Activated B cell treated with CpG ODN at 0.5 μM for 24 hours (primary cell): ENCODE measurements at regions of chr11 and their contacts with region 1.

Region 1: DNA sequence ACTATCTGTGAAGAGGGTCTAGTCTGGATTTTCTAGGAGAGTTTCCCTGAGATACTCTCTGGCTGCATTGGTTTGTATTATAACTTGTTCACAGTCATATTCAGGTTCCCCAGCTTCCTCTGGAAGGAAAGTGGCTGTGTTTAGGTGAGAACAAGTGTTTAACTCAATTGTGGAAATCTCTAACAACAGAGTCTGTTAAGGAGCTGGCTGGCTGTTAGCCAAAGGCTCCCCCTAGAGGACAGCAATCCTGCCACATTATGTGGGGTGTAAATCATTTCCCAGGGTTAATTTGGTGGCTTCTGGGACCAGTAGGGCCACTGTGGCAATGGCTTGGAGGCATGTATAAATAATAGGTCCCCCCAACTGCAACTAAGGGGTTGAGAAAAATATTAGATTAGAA is 18.4 kb downstream of the MS4A6E start:
- DNase-seq: no peak
- ATAC-seq: peak; percentile 56
- H3K4me3 Mint-ChIP-seq: no peak overlapping the region
- H3K27ac Mint-ChIP-seq: no peak overlapping the region
- H3K4me1 Mint-ChIP-seq: peaks cover 35% of the 10 kb centered on the region
- H3K27me3 Mint-ChIP-seq: no peaks in the 10 kb centered on the region
- CTCF ChIP-seq: no peak

Region 2: DNA sequence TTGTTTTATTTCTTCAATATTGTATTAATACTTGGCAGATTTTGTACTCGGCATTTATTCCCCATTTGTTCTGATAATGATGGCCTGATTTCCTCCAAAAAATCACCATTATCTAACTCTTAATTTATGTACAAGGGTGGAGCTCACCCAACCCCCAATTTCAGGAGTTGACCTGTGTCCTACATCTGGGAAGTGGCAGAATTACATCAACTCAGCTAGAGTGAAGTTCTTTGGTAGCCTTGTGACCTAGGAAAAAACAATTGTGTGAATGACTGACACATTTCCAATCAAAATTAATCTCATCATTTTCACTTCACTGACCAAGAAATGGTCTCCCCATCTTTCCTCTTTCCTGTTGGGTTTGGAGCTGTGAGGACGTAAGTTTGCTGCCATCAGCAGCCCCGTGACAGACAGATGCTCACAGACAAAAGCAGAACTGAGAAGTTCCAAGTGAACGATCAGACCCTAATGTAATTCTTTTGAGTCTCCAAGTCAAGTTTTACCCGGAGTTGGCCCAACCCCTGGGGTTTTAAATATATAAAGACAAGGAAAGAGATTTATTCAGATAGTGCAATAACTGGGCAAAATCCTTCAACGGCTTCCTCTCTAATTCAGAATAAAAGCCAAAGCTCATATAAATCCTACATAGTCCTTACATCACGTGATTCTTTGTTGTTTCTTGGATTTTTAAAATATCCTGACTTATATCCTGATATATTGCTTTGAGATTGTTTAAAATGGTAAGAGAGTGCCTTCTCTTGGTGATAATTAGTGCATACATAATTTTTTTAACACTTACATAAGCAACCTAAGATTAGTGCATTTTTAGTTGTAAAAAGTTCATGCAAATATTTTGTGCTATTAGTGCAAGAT is 34.8 kb before region 1 on chr11:
- CTCF ChIA-PET with region 1: interaction called, 4 read pairs
- POLR2A ChIA-PET with region 1: interaction called, 3 read pairs
- intact Hi-C with region 1: loop called (anchors 5 kb)
- DNase-seq: no peak
- ATAC-seq: peak; percentile 75
- H3K4me3 Mint-ChIP-seq: peak overlapping the region; percentile 58
- H3K27ac Mint-ChIP-seq: peak overlapping the region; percentile 91
- H3K4me1 Mint-ChIP-seq: peaks cover 49% of the 10 kb centered on the region
- H3K27me3 Mint-ChIP-seq: no peaks in the 10 kb centered on the region
- CTCF ChIP-seq: no peak

Region 3: DNA sequence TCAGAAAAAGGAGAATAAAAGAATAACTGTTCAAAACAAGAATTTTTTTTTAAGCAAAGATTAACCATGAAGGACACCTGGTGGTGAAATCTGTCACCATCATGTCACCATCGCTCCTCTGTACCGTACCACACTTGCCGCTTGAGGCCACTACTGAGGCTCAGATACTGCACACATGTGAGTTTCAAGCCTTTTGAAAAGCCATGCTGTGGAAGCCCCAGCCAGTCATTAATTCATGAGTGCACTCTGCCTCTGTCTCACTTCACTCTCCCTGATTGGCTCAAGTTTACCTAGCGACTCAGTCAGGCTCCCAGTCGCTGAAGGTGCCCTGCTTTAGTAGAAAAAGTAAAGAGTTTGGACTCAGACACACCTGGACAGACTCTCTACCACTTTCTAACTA is 140.5 kb after region 1 on chr11:
- CTCF ChIA-PET with region 1: interaction called, 12 read pairs
- POLR2A ChIA-PET with region 1: no interaction called
- intact Hi-C with region 1: loop called (anchors 1 kb)
- DNase-seq: peak; percentile 40
- ATAC-seq: peak; percentile 95
- H3K4me3 Mint-ChIP-seq: peak overlapping the region; percentile 42
- H3K27ac Mint-ChIP-seq: peak overlapping the region; percentile 63
- H3K4me1 Mint-ChIP-seq: peaks cover 55% of the 10 kb centered on the region
- H3K27me3 Mint-ChIP-seq: no peaks in the 10 kb centered on the region
- CTCF ChIP-seq: peak; percentile 44

Region 4: DNA sequence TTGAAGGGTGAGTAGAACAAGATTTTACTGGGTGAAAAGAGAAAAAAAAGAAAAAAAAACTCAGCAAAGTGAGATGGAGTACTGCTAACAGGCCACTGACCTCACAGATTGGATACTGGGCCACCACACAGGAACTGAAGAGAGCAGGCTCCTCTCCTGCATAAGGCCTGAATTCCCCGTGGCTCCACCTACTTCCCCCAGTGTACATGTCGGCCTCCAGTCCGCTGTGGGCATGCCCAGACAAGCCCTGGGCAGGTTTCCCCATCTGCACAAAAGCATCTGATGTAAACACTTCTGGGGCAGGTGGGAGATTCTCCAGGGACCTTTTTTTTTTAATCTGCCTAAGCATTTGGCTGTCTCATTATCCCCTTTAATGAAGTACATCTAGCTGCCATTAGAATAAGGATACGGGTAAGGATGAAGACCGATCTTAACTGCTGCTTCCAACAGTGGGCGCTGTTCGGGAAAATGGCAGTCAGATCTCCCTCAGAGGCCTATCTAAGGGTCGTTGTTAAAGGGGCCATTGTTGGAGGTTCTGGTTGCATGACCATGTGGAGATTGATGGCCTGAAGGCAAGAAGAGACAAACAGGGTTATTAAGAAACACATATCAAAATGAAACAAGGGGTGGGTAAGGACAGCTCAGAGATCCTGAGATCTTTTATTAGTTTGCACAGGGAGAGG is 218.2 kb after region 1 on chr11:
- CTCF ChIA-PET with region 1: no interaction called
- POLR2A ChIA-PET with region 1: no interaction called
- intact Hi-C with region 1: no loop called
- DNase-seq: no peak
- ATAC-seq: peak; percentile 75
- H3K4me3 Mint-ChIP-seq: no peak overlapping the region
- H3K27ac Mint-ChIP-seq: no peak overlapping the region
- H3K4me1 Mint-ChIP-seq: peaks cover 9% of the 10 kb centered on the region
- H3K27me3 Mint-ChIP-seq: peaks cover 3% of the 10 kb centered on the region
- CTCF ChIP-seq: no peak

Region 5: DNA sequence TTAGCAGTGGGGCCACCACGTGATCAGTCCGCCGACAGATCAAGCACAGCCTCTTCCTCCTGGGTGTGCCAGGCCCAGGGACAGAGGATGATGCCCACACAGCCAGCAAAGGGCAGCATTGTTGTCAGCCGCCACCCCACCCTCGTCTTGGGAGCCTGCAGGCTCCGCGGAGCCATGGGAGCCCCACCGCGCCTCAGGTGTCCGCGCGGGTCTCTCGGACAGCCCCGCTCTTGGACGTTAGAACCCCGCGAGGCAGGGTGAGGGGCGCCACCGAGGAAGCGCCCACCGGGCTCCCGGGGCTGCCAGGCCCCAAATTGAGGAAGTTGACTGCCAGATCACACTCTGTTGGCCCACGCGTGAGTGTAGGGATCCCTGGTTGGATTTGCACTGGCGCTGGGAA is 270.0 kb after region 1 on chr11:
- CTCF ChIA-PET with region 1: interaction called, 50 read pairs
- POLR2A ChIA-PET with region 1: no interaction called
- intact Hi-C with region 1: loop called (anchors 1 kb)
- DNase-seq: no peak
- ATAC-seq: no peak
- H3K4me3 Mint-ChIP-seq: no peak overlapping the region
- H3K27ac Mint-ChIP-seq: no peak overlapping the region
- H3K4me1 Mint-ChIP-seq: peaks cover 10% of the 10 kb centered on the region
- H3K27me3 Mint-ChIP-seq: peaks cover 9% of the 10 kb centered on the region
- CTCF ChIP-seq: no peak

Region 6: DNA sequence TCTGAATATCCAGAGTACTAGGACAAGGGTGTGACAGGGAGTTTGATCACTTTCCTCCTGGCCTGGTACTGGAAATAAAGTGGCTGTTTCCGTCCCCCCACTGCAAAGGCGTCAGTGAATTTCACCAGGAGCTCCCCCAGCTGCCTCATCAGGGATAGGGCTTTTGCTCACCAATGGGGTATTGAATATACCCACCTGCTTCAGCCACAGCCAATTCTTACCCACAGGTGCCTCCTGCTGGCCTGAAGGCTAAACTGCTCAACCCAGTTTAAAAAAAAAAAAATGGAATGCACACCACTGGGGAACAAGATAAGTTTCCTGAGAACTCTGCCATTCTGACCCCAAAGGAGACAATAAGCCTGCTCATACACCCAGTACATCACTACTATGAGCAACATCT is 288.6 kb after region 1 on chr11:
- CTCF ChIA-PET with region 1: interaction called, 28 read pairs
- POLR2A ChIA-PET with region 1: interaction called, 4 read pairs
- intact Hi-C with region 1: loop called (anchors 1 kb)
- DNase-seq: no peak
- ATAC-seq: peak; percentile 59
- H3K4me3 Mint-ChIP-seq: peak overlapping the region; percentile 58
- H3K27ac Mint-ChIP-seq: peak overlapping the region; percentile 78
- H3K4me1 Mint-ChIP-seq: peaks cover 41% of the 10 kb centered on the region
- H3K27me3 Mint-ChIP-seq: peaks cover 5% of the 10 kb centered on the region
- CTCF ChIP-seq: peak; percentile 42